Activated CD4-positive, alpha-beta T cell treated with anti-CD3 and anti-CD28 coated beads for 36 hours (primary cell): ENCODE measurements at regions of chr10 and their contacts with region 1.

Region 1: GRCh38 chr10:78053211-78053868 is 19.7 kb downstream of the RPS24 start:
- DNase-seq: no peak
- ATAC-seq: no peak
- H3K4me3 Mint-ChIP-seq: no peak overlapping the region
- H3K27ac Mint-ChIP-seq: no peak overlapping the region
- H3K4me1 Mint-ChIP-seq: no peaks in the 10 kb centered on the region
- H3K27me3 Mint-ChIP-seq: no peaks in the 10 kb centered on the region

Region 2: DNA sequence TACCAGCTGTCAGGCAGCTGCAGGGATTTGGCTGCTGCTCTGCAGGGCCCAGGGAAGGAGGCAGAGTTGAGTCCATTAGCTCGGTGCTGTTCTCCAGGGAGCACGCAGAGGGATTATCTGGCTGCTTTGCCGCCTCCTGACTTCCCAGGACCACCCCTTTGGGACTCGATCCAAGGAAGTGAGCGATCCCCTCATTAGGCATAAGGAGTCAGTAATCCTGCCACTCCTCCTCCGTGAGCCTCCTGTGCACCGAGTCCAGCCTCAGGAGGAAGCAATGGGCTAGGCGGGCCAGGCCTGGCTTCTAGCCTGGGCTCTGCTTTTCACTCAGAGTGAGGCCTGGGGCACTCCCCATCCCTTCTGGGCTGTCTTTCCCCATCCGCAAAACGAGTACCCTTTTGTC is 398.3 kb after region 1 on chr10:
- CTCF ChIA-PET with region 1: no interaction called
- POLR2A ChIA-PET with region 1: interaction called, 16 read pairs
- intact Hi-C with region 1: no loop called
- DNase-seq: no peak
- ATAC-seq: no peak
- H3K4me3 Mint-ChIP-seq: no peak overlapping the region
- H3K27ac Mint-ChIP-seq: no peak overlapping the region
- H3K4me1 Mint-ChIP-seq: no peaks in the 10 kb centered on the region
- H3K27me3 Mint-ChIP-seq: peaks cover 5% of the 10 kb centered on the region